ENCODE measurements at regions of chr16 and their contacts with region 1.

Region 1: GRCh38 chr16:5175266-5175665 is 77.7 kb upstream of the EEF2KMT start:
- DNase-seq: no peak
- ATAC-seq: no peak
- H3K4me3 ChIP-seq: no peak overlapping the region
- H3K27ac ChIP-seq: no peak overlapping the region
- H3K4me1 ChIP-seq: no peaks in the 10 kb centered on the region
- H3K27me3 ChIP-seq: peaks cover 0 to 15% (median 0%) of the 10 kb centered on the region in 7 donors
- CTCF ChIP-seq: no peak

Region 2: DNA sequence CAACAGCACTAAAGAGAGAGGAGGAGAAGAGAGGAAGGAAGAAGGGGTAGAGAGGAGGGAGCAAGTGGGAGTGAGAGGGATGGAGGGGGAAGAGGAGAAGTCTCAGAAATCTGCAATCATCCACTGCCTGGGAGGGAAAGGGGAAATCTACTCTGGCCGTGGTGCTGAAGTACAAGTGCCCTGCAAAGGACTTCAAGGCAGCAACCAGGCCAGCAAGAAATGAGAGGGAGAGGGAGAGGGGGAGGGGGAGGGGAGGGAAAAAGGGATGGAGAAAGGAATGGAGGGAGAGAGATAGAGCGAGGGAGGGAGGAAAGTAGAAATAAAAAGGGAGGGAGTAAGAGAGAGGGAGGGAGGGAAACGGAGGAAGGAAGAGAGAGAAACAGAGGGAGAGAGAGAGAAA is 53.1 kb after region 1 on chr16:
- intact Hi-C with region 1: loop called in 1 of 10 experiments (anchors 5 kb)
- DNase-seq: no peak
- ATAC-seq: no peak
- H3K4me3 ChIP-seq: no peak overlapping the region
- H3K27ac ChIP-seq: no peak overlapping the region
- H3K4me1 ChIP-seq: no peaks in the 10 kb centered on the region
- H3K27me3 ChIP-seq: peaks cover 0 to 47% (median 18%) of the 10 kb centered on the region in 7 donors
- CTCF ChIP-seq: no peak

Measured in heart right ventricle (tissue), 16 donors.